Posterior vena cava (tissue), 2 donors: ENCODE measurements at regions of chr5 and their contacts with region 1.

Region 1: GRCh38 chr5:157253547-157253946 is 12.4 kb upstream of the CYFIP2 start:
- DNase-seq: no peak

Region 2: DNA sequence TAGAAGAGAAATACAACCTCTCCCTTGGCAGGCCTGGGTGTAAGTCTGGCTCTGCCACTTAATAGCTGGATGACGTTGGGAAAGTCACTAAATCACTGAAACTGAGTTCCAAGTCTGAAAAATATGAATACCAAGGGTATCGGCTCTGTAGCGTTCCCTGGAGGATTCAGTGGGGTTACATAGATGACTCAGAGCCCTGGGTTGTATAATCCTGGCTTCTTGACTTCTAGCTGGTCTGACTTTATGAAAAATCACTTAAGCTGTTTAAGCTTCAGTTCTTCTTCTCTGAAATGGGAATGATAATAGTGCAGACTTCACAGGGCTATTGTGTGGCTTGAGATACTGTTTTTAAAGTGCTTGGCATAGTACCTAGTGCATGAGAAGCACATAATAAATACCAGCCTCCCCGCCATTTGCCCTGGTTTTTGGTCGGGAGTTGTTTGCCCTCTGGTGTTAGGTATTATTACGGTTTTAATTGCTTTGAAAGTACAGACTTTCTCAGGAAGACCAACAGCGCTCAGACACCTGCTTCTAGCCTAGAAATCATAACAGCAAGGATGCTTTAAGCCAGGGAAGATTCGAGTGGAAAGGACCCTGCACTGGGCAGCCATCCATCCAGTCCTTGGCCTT is 55.4 kb after region 1 on chr5:
- intact Hi-C with region 1: loop called in 1 of 2 experiments (anchors 10 kb)
- DNase-seq: no peak

Region 3: GRCh38 chr5:157659868-157660660 is 406.5 kb after region 1 on chr5:
- intact Hi-C with region 1: no loop called
- DNase-seq: no peak